Aorta (tissue), 5 donors: ENCODE measurements at regions of chr3 and their contacts with region 1.

Region 1: DNA sequence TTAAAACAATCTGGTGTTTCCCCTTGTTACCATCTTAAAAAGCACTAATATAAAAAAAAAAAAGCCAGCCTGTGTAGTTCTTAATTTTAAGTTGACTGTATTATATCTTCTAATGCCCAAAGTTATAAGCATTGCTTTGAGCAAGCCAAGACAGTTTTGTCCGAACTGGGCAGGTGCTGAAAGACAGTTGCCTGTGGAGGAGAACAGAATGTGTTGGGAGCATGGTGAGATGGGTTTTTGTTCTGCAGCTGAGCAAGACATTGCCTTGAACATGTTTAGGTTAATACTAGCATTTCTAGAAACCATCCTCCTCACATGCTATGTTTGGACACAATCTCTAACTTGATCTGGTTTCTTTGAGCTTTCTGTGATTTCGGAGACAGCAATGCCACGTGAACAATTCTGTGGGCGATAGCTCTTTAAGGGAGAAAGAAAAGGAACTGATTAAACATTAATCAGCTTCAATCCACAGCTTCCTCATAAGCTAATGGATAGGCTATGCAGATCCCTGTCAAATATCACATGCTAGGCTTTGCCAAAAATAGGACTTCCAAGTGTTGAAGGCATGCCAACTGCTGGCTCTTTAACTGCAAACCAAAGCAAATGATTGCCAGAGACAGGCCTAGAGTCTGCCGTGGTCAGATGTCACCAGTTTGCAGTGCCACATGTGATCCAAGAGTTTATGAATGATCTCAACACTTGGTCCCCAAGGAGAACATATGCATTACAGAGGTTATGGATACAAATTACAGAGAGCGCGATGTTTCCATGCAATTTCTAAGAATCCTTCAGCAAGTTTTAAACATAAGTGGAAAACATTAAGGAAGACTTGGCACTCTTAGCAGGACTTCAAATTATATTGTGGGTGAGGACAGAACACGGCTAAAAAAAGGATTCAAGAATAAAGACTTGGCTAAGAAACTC is 428.1 kb downstream of the ROBO2 start:
- DNase-seq: no peak
- ATAC-seq: peak; percentile 66
- H3K4me3 ChIP-seq: no peak overlapping the region
- H3K27ac ChIP-seq: peak overlapping the region in 1 of 2 donors; percentile 44
- H3K4me1 ChIP-seq: peaks cover 0 to 6% of the 10 kb centered on the region in 2 donors
- H3K27me3 ChIP-seq: no peaks in the 10 kb centered on the region

Region 2: GRCh38 chr3:77186728-77187127 is 281.2 kb before region 1 on chr3:
- intact Hi-C with region 1: no loop called
- DNase-seq: no peak
- ATAC-seq: no peak
- H3K4me3 ChIP-seq: no peak overlapping the region
- H3K27ac ChIP-seq: no peak overlapping the region
- H3K4me1 ChIP-seq: no peaks in the 10 kb centered on the region
- H3K27me3 ChIP-seq: no peaks in the 10 kb centered on the region

Region 3: GRCh38 chr3:77320514-77320913 is 147.4 kb before region 1 on chr3:
- intact Hi-C with region 1: loop called in 1 of 2 experiments (anchors 10 kb)
- DNase-seq: no peak
- ATAC-seq: no peak
- H3K4me3 ChIP-seq: no peak overlapping the region
- H3K27ac ChIP-seq: no peak overlapping the region
- H3K4me1 ChIP-seq: peaks cover 0 to 2% of the 10 kb centered on the region in 2 donors
- H3K27me3 ChIP-seq: no peaks in the 10 kb centered on the region